ENCODE measurements at regions of chr12 and their contacts with region 1.

Region 1: DNA sequence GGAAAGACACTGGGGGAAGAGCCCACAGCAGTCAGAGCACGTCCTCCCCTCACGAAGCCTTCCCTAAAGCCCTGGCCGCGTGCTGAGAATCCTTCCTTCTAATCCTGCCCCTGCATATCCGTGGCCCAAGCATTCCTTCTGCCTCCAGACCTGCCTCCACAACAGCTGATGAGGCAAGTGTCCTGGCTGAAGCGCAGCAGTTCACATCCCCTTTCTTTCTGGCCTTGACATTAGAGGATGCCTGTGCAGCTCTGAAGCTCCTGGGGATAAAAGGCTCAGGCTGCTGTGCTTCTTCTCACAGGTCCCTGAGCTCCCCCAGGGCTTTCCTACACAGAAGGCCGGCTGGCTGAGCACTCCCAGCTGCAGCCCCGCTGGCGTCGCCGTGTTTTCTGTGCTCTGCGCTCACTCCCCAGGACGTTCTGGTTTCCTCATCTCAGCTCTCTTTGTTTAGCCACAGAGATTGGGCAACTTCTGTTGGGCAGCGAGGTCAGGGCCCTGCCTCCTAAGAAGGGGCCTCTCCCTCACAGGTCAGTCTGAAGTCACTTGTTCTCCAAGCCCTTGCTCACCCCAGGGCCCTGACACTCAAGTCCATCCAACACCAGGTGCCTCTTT is 45.8 kb downstream of the NINJ2 start:
- DNase-seq: peak; percentile 57 to 83
- ATAC-seq: peak; percentile 43 to 54 (median 51)
- H3K4me3 ChIP-seq: no peak overlapping the region
- H3K27ac ChIP-seq: peak overlapping the region; percentile 86
- H3K4me1 ChIP-seq: peaks cover 59% of the 10 kb centered on the region
- H3K27me3 ChIP-seq: no peaks in the 10 kb centered on the region
- CTCF ChIP-seq: no peak

Region 2: DNA sequence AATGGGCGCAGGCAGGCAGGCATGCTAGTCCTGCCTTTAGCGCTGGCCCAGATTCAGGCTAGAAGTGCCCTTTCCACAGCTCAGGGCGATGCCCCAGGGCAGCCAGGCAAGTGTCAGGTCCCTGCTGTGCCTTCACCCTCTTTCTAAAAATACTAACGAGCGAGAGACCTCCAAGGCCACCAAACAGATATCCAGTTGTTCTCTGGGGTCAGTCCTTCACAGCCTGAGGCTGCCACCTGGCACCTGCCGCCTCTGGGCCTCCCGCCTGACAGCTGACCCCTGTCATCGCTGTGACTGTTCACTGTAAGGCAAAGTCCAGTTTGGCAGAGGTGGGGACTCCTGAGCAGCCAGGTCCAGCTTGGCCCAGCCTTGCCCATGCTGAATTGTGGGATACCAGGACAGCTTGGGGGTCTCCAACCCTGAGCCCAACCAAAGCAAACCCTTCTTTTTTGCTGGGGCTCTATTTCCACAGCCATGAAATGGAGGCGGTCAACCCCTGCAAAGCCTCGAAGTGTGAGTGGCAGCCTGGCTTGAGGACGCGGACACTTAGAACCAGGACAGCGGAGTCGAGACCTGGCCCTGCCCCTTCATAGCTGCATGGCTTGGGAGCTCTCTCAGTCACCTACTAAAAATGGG is 34.1 kb before region 1 on chr12:
- intact Hi-C with region 1: loop called in 1 of 2 experiments (anchors 5 kb)
- DNase-seq: peak; percentile 51 to 89
- ATAC-seq: peak; percentile 92 to 95 (median 94)
- H3K4me3 ChIP-seq: peak overlapping the region; percentile 28
- H3K27ac ChIP-seq: peak overlapping the region; percentile 94
- H3K4me1 ChIP-seq: peaks cover 29% of the 10 kb centered on the region
- H3K27me3 ChIP-seq: no peaks in the 10 kb centered on the region
- CTCF ChIP-seq: no peak

Region 3: GRCh38 chr12:630656-631632 is 13.5 kb after region 1 on chr12:
- intact Hi-C with region 1: loop called in 1 of 2 experiments (anchors 2 kb)
- DNase-seq: peak; percentile 61 to 81
- ATAC-seq: no peak
- H3K4me3 ChIP-seq: no peak overlapping the region
- H3K27ac ChIP-seq: peak overlapping the region; percentile 87
- H3K4me1 ChIP-seq: peaks cover 43% of the 10 kb centered on the region
- H3K27me3 ChIP-seq: no peaks in the 10 kb centered on the region
- CTCF ChIP-seq: no peak